ENCODE measurements at regions of chr7 and their contacts with region 1.

Region 1: GRCh38 chr7:154744256-154744860 is 258.6 kb downstream of the PAXIP1 start:
- DNase-seq: peak; percentile 62 to 97 (median 82)

Region 2: DNA sequence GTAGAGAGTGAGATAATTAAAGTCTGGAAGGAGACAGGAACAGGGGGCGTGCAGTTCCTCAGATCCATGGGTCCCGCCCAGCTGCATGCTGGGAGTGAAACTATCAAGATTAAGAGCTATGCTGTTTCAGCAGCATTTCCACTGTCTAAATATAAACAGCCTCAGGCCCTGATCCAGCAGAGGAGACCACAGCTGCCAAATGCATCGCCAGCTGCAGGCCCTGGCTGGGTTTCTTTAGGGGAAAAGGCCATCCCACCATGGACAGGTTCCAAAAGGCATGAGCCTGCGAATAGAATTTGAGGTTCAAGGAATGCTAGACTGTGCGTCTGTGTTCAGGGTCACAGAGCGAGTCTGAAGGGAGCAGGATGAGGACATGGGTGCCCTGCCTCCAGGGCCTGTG is 152.8 kb before region 1 on chr7:
- intact Hi-C with region 1: loop called (anchors 10 kb)
- DNase-seq: peak; percentile 48 to 96 (median 67)

Region 3: GRCh38 chr7:154777023-154777422 is 32.7 kb after region 1 on chr7:
- intact Hi-C with region 1: loop called (anchors 5 kb)
- DNase-seq: peak in 2 of 10 donors; percentile 18 to 84

Measured in posterior cingulate gyrus (tissue), 11 donors.